SK-N-SH (cell line): ENCODE measurements at regions of chr10 and their contacts with region 1.

Region 1: DNA sequence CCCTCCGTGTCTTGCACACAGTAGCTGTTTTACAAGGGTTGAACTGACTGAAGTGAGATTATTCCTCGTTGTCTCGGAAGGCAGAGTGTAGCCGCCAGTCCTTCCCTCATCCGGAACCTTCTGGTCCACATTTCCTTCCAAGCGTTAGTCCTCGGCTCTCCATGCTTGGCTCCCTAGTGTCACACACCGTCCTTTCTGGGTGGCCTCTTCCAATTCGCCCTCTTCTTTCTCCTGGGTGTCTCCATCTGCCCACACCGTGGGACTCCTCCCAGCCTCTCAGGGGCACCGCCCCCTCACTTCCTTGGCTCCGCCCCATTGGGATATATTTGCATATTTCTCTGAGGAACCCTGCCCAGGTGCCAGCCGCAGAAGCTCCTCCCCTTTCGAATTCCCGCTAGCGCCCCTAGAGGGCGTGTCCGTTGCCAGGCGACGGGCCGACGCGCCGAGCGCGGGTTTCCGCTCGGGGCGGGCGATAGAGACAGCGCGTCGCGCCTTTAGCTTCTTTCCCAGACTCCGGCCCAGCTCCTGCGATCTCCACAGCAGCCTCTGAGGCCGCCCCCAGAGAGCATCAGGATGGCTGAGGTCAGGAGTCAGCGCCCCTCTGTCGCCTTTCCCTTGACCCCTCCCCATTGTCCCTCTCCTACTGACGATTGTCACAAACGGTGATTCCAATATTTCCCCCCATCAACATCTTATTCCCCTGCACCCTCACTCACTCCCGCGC is at the start of gene CFAP58:
- DNase-seq: peak; percentile 89
- H3K4me3 ChIP-seq: peak within 1 kb of the TSS; percentile 64 to 66
- H3K27ac ChIP-seq: 0 out of 4 replicates have a peak within 1 kb of the TSS, but pooled peaks of 1 of the 2 experiments have one; percentile 31
- H3K4me1 ChIP-seq: peaks cover 5 to 13% of the 10 kb centered on the region in 2 experiments; a peak in 3 of 4 replicates
- H3K27me3 ChIP-seq: no peaks in the 10 kb centered on the region
- CTCF ChIP-seq: peak; percentile 63
- EP300 ChIP-seq: no peak
- RAD21 ChIP-seq: peak; percentile 9; the same call in 1 of the 2 replicates
- polyA plus RNA-seq, gene CFAP58: 0.38 and 0.47 TPM in 2 replicates

Region 2: GRCh38 chr10:104197364-104197763 is 156.1 kb before region 1 on chr10:
- CTCF ChIA-PET with region 1: no interaction called
- POLR2A ChIA-PET with region 1: no interaction called
- DNase-seq: no peak
- H3K4me3 ChIP-seq: no peak overlapping the region
- H3K27ac ChIP-seq: no peak overlapping the region
- H3K4me1 ChIP-seq: peaks cover 0 to 11% of the 10 kb centered on the region in 2 experiments; a peak in 1 of 4 replicates
- H3K27me3 ChIP-seq: no peaks in the 10 kb centered on the region
- CTCF ChIP-seq: no peak
- EP300 ChIP-seq: no peak
- RAD21 ChIP-seq: no peak

Region 3: DNA sequence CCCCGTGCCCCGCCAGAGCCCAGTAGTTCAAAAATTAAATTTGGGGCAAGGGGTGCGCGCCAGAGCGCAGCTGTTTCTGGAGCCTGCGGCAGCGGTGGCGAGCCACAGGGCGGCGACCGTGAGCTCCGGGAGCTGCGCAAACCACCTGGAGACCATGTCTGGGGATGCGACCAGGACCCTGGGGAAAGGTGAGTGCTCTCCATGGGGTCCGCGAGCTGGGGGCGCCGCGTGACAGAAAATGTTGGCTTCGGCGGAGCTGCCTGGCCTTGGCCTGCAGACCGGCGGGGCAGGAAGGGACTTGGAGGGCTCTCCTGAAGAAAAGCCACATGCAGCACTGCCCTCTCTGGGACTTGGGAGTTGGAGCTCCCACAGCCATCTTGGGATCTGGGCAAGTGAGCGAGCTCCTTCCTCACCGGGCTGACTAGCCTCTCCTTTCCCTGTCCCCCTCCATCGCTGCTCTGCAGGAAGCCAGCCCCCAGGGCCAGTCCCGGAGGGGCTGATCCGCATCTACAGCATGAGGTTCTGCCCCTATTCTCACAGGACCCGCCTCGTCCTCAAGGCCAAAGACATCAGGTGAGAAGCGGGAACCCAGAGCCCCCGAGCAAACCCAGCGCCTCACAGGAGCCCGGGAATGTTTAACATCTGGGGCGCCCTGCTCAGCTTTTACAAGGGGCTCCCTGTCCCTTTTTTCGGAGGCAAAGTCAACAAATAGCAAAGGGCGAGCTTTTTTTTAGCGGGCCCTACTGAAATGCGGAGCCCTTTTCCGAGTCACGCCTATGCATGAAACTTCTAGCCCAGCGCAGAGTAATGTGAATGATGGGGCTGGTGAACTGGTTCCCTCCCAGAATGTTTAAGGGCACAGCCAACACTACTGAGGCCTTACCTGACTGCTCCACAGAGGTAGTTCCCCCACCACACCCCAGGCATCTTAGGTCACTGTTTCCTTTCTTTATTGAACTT is 78.4 kb before region 1 on chr10:
- CTCF ChIA-PET with region 1: interaction called, 55 read pairs
- POLR2A ChIA-PET with region 1: no interaction called
- DNase-seq: peak; percentile 79
- H3K4me3 ChIP-seq: peak overlapping the region in 1 of 2 experiments; percentile 41; a peak in 1 of 4 replicates
- H3K27ac ChIP-seq: peak overlapping the region in 1 of 2 experiments; percentile 76; a peak in 1 of 4 replicates
- H3K4me1 ChIP-seq: peaks cover 2 to 11% of the 10 kb centered on the region in 2 experiments; a peak in 2 of 4 replicates
- H3K27me3 ChIP-seq: no peaks in the 10 kb centered on the region
- CTCF ChIP-seq: peak; percentile 53
- EP300 ChIP-seq: no peak
- RAD21 ChIP-seq: peak; percentile 39

Region 4: DNA sequence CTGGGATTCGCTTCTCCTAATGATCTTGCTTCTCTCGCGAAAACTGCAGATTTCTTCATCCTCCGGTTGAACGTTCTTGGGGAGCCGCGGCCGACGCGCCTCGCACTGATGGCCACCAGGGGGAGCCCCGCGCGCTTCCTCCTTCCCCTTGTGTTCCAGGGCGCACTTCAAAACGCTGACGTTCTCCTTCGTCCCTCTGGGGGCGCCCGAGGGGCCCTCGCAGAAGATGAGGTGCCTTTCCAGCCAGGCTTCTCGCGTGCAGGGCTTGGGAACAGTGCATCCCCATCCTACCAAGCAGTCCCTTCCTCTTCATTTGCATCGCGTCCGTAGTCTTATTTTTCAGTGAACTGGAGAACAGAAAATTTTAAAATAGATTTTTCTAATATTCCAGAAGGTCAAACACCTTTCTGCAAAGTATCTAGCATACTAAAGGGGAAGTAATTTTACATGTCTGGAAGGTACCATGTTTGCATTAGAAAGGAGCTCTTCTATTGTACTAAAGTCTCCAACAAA is 62.0 kb before region 1 on chr10:
- CTCF ChIA-PET with region 1: interaction called, 229 read pairs
- POLR2A ChIA-PET with region 1: no interaction called
- DNase-seq: peak; percentile 91
- H3K4me3 ChIP-seq: peak overlapping the region; percentile 7 to 46; a peak in 2 of 4 replicates
- H3K27ac ChIP-seq: peak overlapping the region in 1 of 2 experiments; percentile 19; a peak in 1 of 4 replicates
- H3K4me1 ChIP-seq: peaks cover 0 to 2% of the 10 kb centered on the region in 2 experiments; a peak in 1 of 4 replicates
- H3K27me3 ChIP-seq: no peaks in the 10 kb centered on the region
- CTCF ChIP-seq: peak; percentile 99
- EP300 ChIP-seq: no peak; a peak in 1 of 4 replicates
- RAD21 ChIP-seq: peak; percentile 84

Region 5: GRCh38 chr10:104322416-104322782 is 31.1 kb before region 1 on chr10:
- CTCF ChIA-PET with region 1: interaction called, 10 read pairs
- POLR2A ChIA-PET with region 1: no interaction called
- DNase-seq: peak; percentile 50
- H3K4me3 ChIP-seq: no peak overlapping the region
- H3K27ac ChIP-seq: peak overlapping the region in 1 of 2 experiments; percentile 41; a peak in 1 of 4 replicates
- H3K4me1 ChIP-seq: peaks cover 26 to 45% of the 10 kb centered on the region in 2 experiments; a peak in 3 of 4 replicates
- H3K27me3 ChIP-seq: no peaks in the 10 kb centered on the region
- CTCF ChIP-seq: no peak
- EP300 ChIP-seq: no peak
- RAD21 ChIP-seq: no peak

Region 6: DNA sequence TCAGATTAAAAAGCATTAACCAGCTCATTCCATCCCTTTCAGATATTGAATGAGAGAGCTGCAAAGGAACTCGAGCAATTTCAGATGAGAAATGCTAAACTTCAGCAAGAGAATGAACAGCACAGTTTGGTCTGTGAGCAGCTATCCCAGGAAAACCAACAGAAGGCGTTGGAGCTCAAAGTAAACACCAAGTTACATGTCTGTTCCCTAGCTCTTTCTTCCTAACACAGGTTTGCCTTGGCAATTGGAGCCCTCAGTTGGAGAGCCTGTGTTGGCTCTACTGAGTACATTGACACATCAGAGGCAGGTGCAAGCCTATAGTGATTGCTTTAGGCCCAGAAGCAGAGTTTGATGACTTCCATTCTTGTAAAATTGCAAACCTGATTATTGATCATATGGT is 14.9 kb after region 1 on chr10:
- CTCF ChIA-PET with region 1: interaction called, 23 read pairs
- POLR2A ChIA-PET with region 1: no interaction called
- DNase-seq: no peak
- H3K4me3 ChIP-seq: no peak overlapping the region
- H3K27ac ChIP-seq: no peak overlapping the region
- H3K4me1 ChIP-seq: no peaks in the 10 kb centered on the region; a peak in 1 of 4 replicates
- H3K27me3 ChIP-seq: no peaks in the 10 kb centered on the region
- CTCF ChIP-seq: no peak
- EP300 ChIP-seq: no peak
- RAD21 ChIP-seq: no peak